ENCODE measurements at regions of chr6 and their contacts with region 1.

Region 1: DNA sequence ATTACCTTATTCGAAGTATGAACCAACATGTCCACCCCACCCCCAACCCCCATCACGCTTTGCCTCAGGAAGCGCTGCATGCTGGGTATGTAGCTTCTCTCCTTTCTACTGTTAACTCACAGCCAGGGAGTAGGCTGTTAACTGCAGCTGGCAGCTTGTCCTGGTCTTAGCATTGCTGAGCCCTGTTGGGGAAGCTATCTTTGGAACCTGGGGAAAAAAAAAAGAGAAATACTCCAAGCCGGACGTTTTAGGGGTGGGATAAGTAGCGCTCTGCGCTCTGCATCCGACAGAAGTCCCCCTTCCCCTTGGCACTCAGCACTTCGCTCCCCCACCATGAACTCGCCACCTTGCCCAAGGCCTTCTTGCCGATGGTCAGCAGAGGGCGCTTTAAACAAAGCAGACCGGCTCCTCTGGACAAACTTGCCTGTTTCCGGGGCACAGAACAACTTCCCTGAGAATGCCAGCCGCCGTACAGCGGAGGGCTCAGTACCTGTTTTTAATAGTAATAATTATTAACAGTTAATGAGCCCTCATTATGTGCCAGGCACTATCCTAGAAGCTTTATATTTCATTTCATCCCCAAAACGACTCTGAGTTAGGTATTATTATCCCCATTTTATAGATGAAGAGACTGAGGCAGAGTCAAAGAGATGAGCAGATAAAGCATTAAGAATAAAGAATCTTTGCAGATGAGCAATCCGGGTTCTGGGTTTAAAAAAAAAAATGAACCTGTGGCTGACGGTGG is 35.2 kb upstream of the MDFI start:
- DNase-seq: peak; percentile 57
- H3K4me3 ChIP-seq: peak overlapping the region; percentile 27
- H3K27ac ChIP-seq: peak overlapping the region; percentile 21
- H3K27me3 ChIP-seq: no peaks in the 10 kb centered on the region
- CTCF ChIP-seq: peak; percentile 94

Region 2: DNA sequence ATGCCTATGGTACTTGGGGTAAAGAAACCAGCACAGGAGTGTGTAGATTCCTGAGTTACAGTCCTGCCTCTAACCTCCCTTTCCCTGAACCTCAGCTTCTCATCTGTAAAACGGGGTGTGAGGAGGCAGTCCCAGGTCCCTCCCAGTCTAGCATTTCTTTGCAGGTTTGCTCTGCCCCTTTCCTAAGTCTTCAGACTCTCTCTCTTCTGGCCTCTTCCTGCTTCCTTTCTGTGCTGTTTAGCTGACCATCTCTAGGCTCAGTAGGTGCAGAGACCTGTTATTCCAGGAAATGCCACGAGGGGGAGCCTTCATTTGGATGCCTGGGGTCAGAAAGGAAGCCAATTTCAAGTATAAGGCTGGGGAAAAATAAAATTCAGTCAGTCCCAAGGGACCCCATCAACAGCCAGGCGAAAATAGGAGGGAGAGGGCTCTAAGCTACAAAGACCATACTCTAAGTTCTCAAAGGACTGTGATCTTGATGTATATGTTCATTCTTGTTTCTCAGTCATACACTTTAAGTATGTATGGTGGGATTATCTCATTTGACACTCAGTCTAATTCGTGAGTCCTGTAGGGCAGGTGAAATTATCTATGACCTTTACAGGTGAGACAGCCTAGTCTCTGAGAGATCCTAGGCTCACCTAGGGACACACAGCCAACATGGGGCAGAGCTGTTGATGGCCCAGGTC is 178.5 kb before region 1 on chr6:
- CTCF ChIA-PET with region 1: interaction called, 45 read pairs
- POLR2A ChIA-PET with region 1: no interaction called
- DNase-seq: peak; percentile 55
- H3K4me3 ChIP-seq: no peak overlapping the region
- H3K27ac ChIP-seq: no peak overlapping the region
- H3K27me3 ChIP-seq: peaks cover 48% of the 10 kb centered on the region
- CTCF ChIP-seq: peak; percentile 92

Region 3: GRCh38 chr6:41511443-41512060 is 91.5 kb before region 1 on chr6:
- CTCF ChIA-PET with region 1: no interaction called
- POLR2A ChIA-PET with region 1: no interaction called
- DNase-seq: no peak
- H3K4me3 ChIP-seq: no peak overlapping the region
- H3K27ac ChIP-seq: no peak overlapping the region
- H3K27me3 ChIP-seq: peaks cover 17% of the 10 kb centered on the region
- CTCF ChIP-seq: no peak

Region 4: GRCh38 chr6:41581381-41581991 is 21.6 kb before region 1 on chr6:
- CTCF ChIA-PET with region 1: interaction called, 13 read pairs
- POLR2A ChIA-PET with region 1: no interaction called
- DNase-seq: peak; percentile 59
- H3K4me3 ChIP-seq: no peak overlapping the region
- H3K27ac ChIP-seq: peak overlapping the region; percentile 55
- H3K27me3 ChIP-seq: no peaks in the 10 kb centered on the region
- CTCF ChIP-seq: no peak

Region 5: GRCh38 chr6:41615254-41615653 is 12.2 kb after region 1 on chr6:
- CTCF ChIA-PET with region 1: interaction called, 21 read pairs
- POLR2A ChIA-PET with region 1: no interaction called
- DNase-seq: no peak
- H3K4me3 ChIP-seq: no peak overlapping the region
- H3K27ac ChIP-seq: no peak overlapping the region
- H3K27me3 ChIP-seq: peaks cover 19% of the 10 kb centered on the region
- CTCF ChIP-seq: no peak

Region 6: GRCh38 chr6:41683510-41684310 is 80.7 kb after region 1 on chr6:
- CTCF ChIA-PET with region 1: interaction called, 135 read pairs
- POLR2A ChIA-PET with region 1: interaction called, 8 read pairs
- DNase-seq: no peak
- H3K4me3 ChIP-seq: peak overlapping the region; percentile 43
- H3K27ac ChIP-seq: no peak overlapping the region
- H3K27me3 ChIP-seq: no peaks in the 10 kb centered on the region
- CTCF ChIP-seq: peak; percentile 86

Region 7: GRCh38 chr6:41775293-41776181 is 172.5 kb after region 1 on chr6:
- CTCF ChIA-PET with region 1: interaction called, 14 read pairs
- POLR2A ChIA-PET with region 1: no interaction called
- DNase-seq: no peak
- H3K4me3 ChIP-seq: no peak overlapping the region
- H3K27ac ChIP-seq: no peak overlapping the region
- H3K27me3 ChIP-seq: no peaks in the 10 kb centered on the region
- CTCF ChIP-seq: peak; percentile 83

Region 8: GRCh38 chr6:41846666-41847237 is 243.7 kb after region 1 on chr6:
- CTCF ChIA-PET with region 1: no interaction called
- POLR2A ChIA-PET with region 1: no interaction called
- DNase-seq: peak; percentile 84
- H3K4me3 ChIP-seq: no peak overlapping the region
- H3K27ac ChIP-seq: peak overlapping the region; percentile 73
- H3K27me3 ChIP-seq: no peaks in the 10 kb centered on the region
- CTCF ChIP-seq: peak; percentile 92